ENCODE measurements at regions of chr9 and their contacts with region 1.

Region 1: GRCh38 chr9:106588626-106589025 is 274.3 kb upstream of the ZNF462 start:
- ATAC-seq: peak in 5 of 8 experiments; percentile 87 to 89 (median 89)
- H3K4me3 ChIP-seq: no peak overlapping the region
- H3K27ac ChIP-seq: no peak overlapping the region
- H3K4me1 ChIP-seq: peaks cover 0 to 7% of the 10 kb centered on the region in 2 donors

Region 2: GRCh38 chr9:106697750-106698502 is 109.3 kb after region 1 on chr9:
- in situ Hi-C with region 1: loop called in 1 of 9 experiments (anchors 25 kb)
- ATAC-seq: peak; percentile 67 to 83 (median 78)
- H3K4me3 ChIP-seq: no peak overlapping the region
- H3K27ac ChIP-seq: no peak overlapping the region
- H3K4me1 ChIP-seq: peaks cover 0 to 4% of the 10 kb centered on the region in 2 donors

Region 3: DNA sequence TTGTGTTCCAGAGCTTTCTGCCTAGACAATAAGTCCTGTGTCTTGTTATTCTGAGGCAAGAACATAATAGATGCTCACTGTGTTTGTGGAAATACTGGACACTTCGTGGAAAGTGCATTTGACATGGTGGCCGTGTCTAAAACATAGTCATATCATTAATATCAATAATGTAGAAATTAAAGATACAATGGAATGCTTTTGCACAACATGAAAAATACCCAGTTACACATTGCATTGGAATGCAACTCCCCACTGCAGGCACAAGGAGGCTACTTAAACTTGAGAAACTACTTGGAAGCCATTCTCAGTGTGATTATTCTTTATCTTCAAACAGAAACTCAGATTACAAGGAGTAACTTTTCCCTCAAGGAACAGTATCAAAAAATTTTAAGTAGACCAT is 129.1 kb after region 1 on chr9:
- in situ Hi-C with region 1: no loop called
- ATAC-seq: no peak
- H3K4me3 ChIP-seq: no peak overlapping the region
- H3K27ac ChIP-seq: no peak overlapping the region
- H3K4me1 ChIP-seq: no peaks in the 10 kb centered on the region

Region 4: DNA sequence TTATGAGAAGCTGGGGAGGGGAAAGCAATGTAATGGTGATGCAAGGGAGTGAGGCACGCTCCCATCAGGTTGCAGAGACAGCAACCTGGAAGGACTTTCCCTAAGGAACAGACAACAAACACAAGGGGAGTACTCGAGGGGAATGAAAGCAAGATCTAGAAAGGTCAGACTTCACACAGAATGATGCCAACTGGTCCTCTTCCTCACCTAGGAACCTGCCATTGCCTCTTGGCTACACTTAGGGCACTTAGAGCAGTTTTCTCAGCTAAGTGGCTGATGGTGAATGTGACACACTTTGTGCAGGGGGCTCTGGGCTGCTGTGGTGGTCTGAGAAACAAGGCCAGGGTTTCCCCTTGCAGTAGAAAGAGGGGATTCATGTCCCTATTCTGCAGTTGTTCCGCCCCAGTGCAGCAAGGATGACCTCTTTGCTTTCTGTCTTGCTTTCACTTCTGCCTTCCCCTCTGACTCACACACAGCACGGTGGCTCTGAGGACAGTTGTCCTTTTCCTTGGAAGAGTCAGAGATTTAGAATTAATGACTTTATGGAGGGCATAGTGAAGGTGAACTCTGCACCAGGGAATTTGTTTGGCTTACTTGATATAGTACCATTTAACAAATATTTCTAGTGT is 1295.0 kb after region 1 on chr9:
- in situ Hi-C with region 1: no loop called
- ATAC-seq: peak in 6 of 8 experiments; percentile 30 to 66 (median 60)
- H3K4me3 ChIP-seq: no peak overlapping the region
- H3K27ac ChIP-seq: no peak overlapping the region
- H3K4me1 ChIP-seq: no peaks in the 10 kb centered on the region